Activated CD8-positive, alpha-beta T cell treated with anti-CD3 and anti-CD28 coated beads, Interleukin-2, amount 10 ng/mL, durations not matched to agents 7 days and 5 days (primary cell): ENCODE measurements at regions of chr12 and their contacts with region 1.

Region 1: GRCh38 chr12:45990468-45991283 is at the start of gene SCAF11:
- DNase-seq: peak; percentile 100
- ATAC-seq: peak; percentile 83
- H3K4me3 Mint-ChIP-seq: peak within 1 kb of the TSS; percentile 95
- H3K27ac Mint-ChIP-seq: peak within 1 kb of the TSS; percentile 99
- H3K4me1 Mint-ChIP-seq: peaks cover 46% of the 10 kb centered on the region
- H3K27me3 Mint-ChIP-seq: peaks cover 5% of the 10 kb centered on the region
- total RNA-seq, gene SCAF11: 131 to 134 TPM

Region 2: DNA sequence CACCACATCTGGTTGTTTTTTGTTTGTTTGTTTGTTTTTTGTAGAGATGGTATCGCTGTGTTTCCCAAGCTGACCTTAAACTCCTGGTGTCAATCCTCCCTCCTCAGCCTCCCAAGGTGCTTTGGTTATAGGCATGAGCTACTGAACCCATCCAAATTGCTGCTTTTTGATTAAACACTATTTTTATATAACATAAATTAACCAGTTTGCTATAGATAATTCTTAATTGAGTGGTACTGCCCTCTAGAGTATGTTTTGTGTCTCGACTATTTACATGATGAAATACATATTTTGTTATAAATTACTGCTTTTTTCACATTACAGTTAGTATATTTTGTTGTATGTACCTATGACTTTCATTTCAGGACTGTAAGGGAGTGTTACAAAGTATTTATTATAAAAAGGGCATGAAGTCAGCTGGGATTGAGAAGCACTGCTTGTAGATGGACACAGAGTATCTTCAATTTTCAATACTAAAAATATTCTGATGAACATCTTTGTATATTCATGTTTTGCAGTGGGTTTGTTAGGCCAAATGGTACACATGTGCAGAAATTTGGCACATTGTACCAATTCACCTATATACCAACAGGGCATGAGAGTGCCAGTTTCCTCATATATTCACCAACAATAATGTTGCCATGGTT is 14.6 kb after region 1 on chr12:
- CTCF ChIA-PET with region 1: interaction called, 10 read pairs
- POLR2A ChIA-PET with region 1: no interaction called
- DNase-seq: no peak
- ATAC-seq: no peak
- H3K4me3 Mint-ChIP-seq: no peak overlapping the region
- H3K27ac Mint-ChIP-seq: no peak overlapping the region
- H3K4me1 Mint-ChIP-seq: no peaks in the 10 kb centered on the region
- H3K27me3 Mint-ChIP-seq: peaks cover 4% of the 10 kb centered on the region

Region 3: GRCh38 chr12:46217541-46218321 is 227.1 kb after region 1 on chr12:
- CTCF ChIA-PET with region 1: interaction called, 4 read pairs
- POLR2A ChIA-PET with region 1: interaction called, 16 read pairs
- DNase-seq: peak; percentile 82
- ATAC-seq: peak; percentile 8
- H3K4me3 Mint-ChIP-seq: peak overlapping the region; percentile 61
- H3K27ac Mint-ChIP-seq: peak overlapping the region; percentile 84
- H3K4me1 Mint-ChIP-seq: peaks cover 95% of the 10 kb centered on the region
- H3K27me3 Mint-ChIP-seq: no peaks in the 10 kb centered on the region